ENCODE measurements at regions of chr11 and their contacts with region 1.

Region 1: GRCh38 chr11:17504330-17505107 is 27.9 kb upstream of the ABCC8 start:
- DNase-seq: no peak

Region 2: DNA sequence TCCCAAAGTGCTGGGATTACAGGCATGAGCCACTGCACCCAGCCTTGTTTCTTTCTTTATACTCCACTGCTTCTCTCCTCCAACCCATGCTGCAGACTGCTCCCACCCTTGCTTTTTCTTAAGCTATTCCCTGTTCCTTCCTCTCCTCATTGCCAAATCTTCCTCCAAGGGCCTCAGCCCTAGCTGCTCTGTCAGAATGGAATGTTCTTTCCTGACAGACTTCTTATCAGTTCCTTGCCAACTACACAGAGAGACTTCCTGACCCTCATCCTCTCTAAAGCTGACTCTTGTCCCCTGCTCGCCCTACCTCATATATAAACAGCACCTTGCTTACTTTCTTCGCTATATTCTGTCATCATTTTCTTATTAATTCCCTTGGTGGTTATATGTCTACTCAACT is 279.8 kb before region 1 on chr11:
- intact Hi-C with region 1: loop called (anchors 5 kb)
- DNase-seq: no peak

Region 3: DNA sequence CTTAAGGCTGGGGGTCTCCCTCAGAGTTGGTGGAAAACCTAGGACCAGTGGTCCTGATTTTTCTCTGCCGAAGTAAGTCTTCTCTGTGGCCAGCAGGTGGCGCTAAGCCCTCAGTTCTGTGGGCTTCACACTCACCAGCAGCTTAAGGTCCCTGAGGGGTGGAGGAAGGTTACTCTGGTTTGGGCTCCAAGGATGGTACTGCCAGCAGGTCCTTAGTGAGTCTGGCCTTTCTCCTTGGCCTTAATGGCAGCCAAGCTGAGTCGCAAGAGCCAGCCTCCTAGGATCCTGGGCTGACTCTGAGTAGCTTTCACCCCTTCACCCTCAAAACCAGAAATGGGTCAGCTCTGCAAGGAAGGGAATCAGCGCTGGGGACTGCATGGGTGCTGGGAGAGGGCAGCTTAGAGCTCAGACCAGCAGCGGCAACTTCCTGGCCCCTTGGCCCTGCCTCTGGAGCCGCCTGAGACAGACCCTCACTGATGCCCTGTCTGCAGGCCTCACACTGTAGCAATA is 120.5 kb before region 1 on chr11:
- intact Hi-C with region 1: loop called (anchors 1 kb)
- DNase-seq: no peak